MCF 10A (cell line): ENCODE measurements at regions of chr17 and their contacts with region 1.

Region 1: DNA sequence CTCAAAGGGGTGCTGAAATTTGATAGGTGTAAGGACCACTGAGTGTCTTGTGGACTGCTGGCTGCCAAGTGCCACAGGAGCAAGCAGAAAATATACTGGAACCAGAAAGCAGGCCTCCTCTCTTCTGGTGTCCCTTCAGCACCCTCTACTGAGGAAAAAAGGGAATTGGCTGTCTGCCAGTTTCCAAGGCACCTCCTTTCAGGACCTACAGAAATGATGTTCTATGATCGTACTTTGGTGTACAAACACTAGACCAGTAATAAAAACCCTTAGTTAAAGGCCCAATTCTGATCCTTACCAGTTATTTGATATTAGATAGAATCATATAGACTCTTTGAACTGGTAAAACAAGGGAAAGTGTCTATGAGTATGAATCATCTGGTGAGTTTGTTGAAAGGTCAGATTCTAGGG is 35.8 kb upstream of the BCAS3 start:
- DNase-seq: peak; percentile 86
- H3K4me3 Mint-ChIP-seq: no peak overlapping the region
- H3K27ac Mint-ChIP-seq: no peak overlapping the region
- H3K4me1 Mint-ChIP-seq: peaks cover 7% of the 10 kb centered on the region
- H3K27me3 Mint-ChIP-seq: no peaks in the 10 kb centered on the region
- CTCF ChIP-seq: peak; percentile 30

Region 2: GRCh38 chr17:60463157-60463835 is 178.5 kb before region 1 on chr17:
- CTCF ChIA-PET with region 1: interaction called, 17 read pairs
- POLR2A ChIA-PET with region 1: no interaction called
- intact Hi-C with region 1: loop called (anchors 5 kb)
- DNase-seq: no peak
- H3K4me3 Mint-ChIP-seq: no peak overlapping the region
- H3K27ac Mint-ChIP-seq: no peak overlapping the region
- H3K4me1 Mint-ChIP-seq: no peaks in the 10 kb centered on the region
- H3K27me3 Mint-ChIP-seq: no peaks in the 10 kb centered on the region
- CTCF ChIP-seq: no peak

Region 3: GRCh38 chr17:60525685-60526514 is 115.9 kb before region 1 on chr17 and contains the start of gene APPBP2:
- CTCF ChIA-PET with region 1: interaction called, 9 read pairs
- POLR2A ChIA-PET with region 1: interaction called, 4 read pairs
- intact Hi-C with region 1: loop called (anchors 1 kb)
- DNase-seq: peak; percentile 85
- H3K4me3 Mint-ChIP-seq: peak within 1 kb of the TSS; percentile 91
- H3K27ac Mint-ChIP-seq: peak within 1 kb of the TSS; percentile 98
- H3K4me1 Mint-ChIP-seq: peaks cover 30% of the 10 kb centered on the region
- H3K27me3 Mint-ChIP-seq: no peaks in the 10 kb centered on the region
- CTCF ChIP-seq: no peak
- total RNA-seq, gene APPBP2: 33.1 and 39.6 TPM in 2 replicates

Region 4: DNA sequence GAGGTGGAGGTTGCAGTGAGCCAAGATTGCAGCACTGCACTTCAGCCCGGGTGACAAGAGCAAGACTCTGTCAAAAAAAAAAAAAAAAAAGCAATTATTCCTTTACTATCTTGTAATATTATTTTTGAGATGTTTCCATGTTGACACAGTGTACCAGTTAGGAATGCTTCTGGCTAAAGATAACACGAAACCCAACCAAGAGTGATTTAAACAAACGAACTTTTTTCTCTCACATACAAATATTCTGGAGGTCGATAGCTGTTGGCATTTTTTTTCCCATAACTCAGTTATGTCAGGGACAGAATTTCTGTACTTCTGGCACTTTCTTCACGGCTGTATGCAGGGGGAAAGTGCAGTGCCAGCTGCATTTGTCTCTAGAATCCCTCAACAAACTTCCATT is 51.7 kb before region 1 on chr17:
- CTCF ChIA-PET with region 1: interaction called, 11 read pairs
- POLR2A ChIA-PET with region 1: no interaction called
- intact Hi-C with region 1: no loop called
- DNase-seq: no peak
- H3K4me3 Mint-ChIP-seq: no peak overlapping the region
- H3K27ac Mint-ChIP-seq: no peak overlapping the region
- H3K4me1 Mint-ChIP-seq: no peaks in the 10 kb centered on the region
- H3K27me3 Mint-ChIP-seq: no peaks in the 10 kb centered on the region
- CTCF ChIP-seq: no peak

Region 5: DNA sequence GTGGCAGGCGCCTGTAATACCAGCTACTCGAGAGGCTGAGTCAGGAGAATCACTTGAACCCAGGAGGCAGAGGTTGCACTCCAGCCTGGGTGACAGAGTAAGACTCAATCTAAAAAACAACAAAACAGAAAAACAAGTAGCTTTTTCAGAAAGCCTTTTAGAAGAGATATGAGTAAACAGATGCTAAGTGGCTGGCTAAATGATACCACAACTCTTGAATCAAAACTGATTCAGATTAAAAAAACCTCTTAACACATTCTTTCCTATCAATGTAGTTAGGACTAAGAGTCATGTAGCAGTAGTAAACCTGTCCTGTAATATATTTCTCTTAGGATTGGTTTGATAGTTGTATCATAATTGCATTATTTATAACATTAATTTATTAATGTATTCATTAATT is 18.9 kb before region 1 on chr17:
- CTCF ChIA-PET with region 1: interaction called, 12 read pairs
- POLR2A ChIA-PET with region 1: no interaction called
- intact Hi-C with region 1: no loop called
- DNase-seq: no peak
- H3K4me3 Mint-ChIP-seq: no peak overlapping the region
- H3K27ac Mint-ChIP-seq: no peak overlapping the region
- H3K4me1 Mint-ChIP-seq: peaks cover 6% of the 10 kb centered on the region
- H3K27me3 Mint-ChIP-seq: no peaks in the 10 kb centered on the region
- CTCF ChIP-seq: no peak

Region 6: GRCh38 chr17:60757437-60757836 is 115.6 kb after region 1 on chr17:
- CTCF ChIA-PET with region 1: no interaction called
- POLR2A ChIA-PET with region 1: no interaction called
- intact Hi-C with region 1: no loop called
- DNase-seq: no peak
- H3K4me3 Mint-ChIP-seq: no peak overlapping the region
- H3K27ac Mint-ChIP-seq: no peak overlapping the region
- H3K4me1 Mint-ChIP-seq: no peaks in the 10 kb centered on the region
- H3K27me3 Mint-ChIP-seq: no peaks in the 10 kb centered on the region
- CTCF ChIP-seq: no peak

Region 7: DNA sequence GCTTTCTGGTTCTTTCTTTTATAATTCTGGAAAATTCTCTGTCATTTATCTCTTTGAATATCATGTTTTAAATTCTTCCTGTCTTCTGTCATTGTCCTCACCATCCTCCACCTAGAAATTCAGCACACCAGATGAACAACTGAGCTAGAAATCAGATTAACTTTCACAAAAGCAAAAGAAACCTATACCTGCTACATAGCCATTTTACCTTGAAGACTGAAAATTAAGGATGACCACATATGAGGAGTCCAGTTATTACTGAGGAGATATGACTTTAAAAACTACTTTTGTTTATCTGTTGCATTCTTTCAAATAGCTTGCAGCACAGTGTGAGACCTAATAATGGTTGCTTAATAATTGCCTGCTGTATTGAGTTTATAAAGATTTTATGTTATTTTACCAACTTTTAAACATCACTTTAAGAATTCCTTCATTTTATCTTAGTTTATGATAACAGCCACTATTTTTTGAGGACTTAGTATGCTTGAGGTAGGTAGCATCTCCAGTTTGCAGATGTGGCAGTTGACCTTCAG is 140.1 kb after region 1 on chr17:
- CTCF ChIA-PET with region 1: no interaction called
- POLR2A ChIA-PET with region 1: no interaction called
- intact Hi-C with region 1: no loop called
- DNase-seq: no peak
- H3K4me3 Mint-ChIP-seq: no peak overlapping the region
- H3K27ac Mint-ChIP-seq: no peak overlapping the region
- H3K4me1 Mint-ChIP-seq: peaks cover 9% of the 10 kb centered on the region
- H3K27me3 Mint-ChIP-seq: no peaks in the 10 kb centered on the region
- CTCF ChIP-seq: no peak